Body of pancreas (tissue), 4 donors: ENCODE measurements at regions of chr1 and their contacts with region 1.

Region 1: DNA sequence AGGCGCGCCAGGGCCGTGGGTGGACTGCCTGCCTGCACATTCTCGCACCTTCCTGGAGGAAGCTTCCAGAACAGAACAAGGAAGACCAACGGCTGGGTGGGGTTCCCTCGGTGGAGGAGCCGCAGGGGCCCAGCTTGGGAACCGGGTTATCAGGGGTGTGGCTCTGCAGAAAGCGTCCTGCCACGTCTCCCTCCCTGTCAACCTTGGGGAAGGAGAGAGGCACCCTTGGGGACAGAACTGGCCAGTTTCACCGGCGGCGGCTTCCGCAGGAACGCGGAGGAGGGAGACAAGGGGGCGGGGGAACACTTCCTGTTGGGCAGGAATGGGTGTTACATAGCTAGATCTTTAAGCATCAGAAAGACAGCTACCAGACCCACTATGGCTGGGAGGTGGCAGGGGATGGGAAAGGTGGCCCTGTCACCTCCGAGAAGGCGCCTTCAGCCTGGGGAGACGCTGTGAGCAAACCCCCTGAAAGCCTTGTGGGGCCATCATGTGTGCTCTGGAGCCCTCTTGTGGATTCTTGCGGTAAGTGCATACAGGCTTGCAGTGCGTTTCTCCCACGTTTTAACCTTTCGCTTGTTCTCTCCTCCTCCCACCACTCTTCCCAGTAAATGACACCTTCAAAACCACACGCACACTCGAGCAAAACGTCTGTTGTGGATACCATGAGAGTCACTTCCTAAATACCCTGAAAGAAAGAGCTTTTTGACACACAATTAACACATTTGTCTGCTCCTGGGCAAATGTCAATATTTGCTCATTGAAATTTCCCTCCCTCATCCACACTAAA is 3.8 kb upstream of the PLEKHA6 start:
- DNase-seq: peak; percentile 74 to 78 (median 76)
- ATAC-seq: peak; percentile 84
- H3K4me3 ChIP-seq: peak overlapping the region in 1 of 2 donors; percentile 3
- H3K27ac ChIP-seq: peak overlapping the region in 3 of 4 donors; percentile 63 to 76 (median 65)
- H3K4me1 ChIP-seq: peaks cover 40% of the 10 kb centered on the region
- H3K27me3 ChIP-seq: no peaks in the 10 kb centered on the region
- CTCF ChIP-seq: peak; percentile 87 to 99 (median 97)
- POLR2A ChIP-seq: peak in 2 of 3 donors; percentile 12 to 32

Region 2: DNA sequence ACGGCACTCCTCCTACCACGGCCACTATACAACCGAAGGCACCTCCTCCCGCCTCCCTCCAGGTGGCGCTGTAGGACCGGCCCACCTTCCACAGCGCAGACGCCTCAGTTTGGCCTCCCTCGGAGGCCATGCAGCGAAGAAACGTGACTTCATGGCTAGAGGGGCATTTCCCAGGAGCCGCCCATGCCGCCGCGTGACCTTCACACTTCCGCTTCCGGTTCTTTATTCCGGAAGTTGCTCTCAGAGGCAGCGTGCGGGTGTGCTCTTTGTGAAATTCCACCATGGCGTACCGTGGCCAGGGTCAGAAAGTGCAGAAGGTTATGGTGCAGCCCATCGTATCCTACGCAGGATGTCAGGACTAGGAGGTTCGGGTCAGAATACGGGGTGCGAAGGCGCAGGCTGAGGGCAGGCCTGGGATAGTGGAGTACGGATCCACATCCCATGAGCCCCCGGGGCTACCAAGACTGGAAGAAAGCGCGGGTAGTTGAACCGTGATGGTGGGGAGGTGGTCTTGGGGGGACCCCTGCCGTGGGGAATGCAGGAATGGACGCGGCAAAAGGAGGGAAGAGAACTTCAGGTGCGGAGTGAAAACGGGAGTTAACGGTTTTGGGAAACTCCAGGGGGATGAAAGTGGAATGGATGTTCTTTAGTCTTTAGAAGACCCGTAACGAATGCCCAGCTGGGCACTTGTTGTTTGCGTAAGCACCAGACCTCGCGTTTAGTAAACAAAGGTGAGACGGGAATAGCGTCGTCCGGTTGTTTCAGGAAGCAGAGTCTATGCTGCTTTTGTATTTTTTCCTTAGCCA is 501.9 kb before region 1 on chr1 and contains the start of gene SNRPE:
- intact Hi-C with region 1: loop called (anchors 10 kb)
- DNase-seq: peak; percentile 96 to 97 (median 96)
- ATAC-seq: peak; percentile 95
- H3K4me3 ChIP-seq: peak within 1 kb of the TSS; percentile 77 to 83
- H3K27ac ChIP-seq: peak within 1 kb of the TSS; percentile 12 to 89 (median 78)
- H3K4me1 ChIP-seq: peaks cover 37% of the 10 kb centered on the region
- H3K27me3 ChIP-seq: no peaks in the 10 kb centered on the region
- CTCF ChIP-seq: peak; percentile 85 to 100 (median 98)
- POLR2A ChIP-seq: peak in 2 of 3 donors; percentile 77 to 79
- total RNA-seq, gene SNRPE: 27.2 to 80.8 TPM

Region 3: DNA sequence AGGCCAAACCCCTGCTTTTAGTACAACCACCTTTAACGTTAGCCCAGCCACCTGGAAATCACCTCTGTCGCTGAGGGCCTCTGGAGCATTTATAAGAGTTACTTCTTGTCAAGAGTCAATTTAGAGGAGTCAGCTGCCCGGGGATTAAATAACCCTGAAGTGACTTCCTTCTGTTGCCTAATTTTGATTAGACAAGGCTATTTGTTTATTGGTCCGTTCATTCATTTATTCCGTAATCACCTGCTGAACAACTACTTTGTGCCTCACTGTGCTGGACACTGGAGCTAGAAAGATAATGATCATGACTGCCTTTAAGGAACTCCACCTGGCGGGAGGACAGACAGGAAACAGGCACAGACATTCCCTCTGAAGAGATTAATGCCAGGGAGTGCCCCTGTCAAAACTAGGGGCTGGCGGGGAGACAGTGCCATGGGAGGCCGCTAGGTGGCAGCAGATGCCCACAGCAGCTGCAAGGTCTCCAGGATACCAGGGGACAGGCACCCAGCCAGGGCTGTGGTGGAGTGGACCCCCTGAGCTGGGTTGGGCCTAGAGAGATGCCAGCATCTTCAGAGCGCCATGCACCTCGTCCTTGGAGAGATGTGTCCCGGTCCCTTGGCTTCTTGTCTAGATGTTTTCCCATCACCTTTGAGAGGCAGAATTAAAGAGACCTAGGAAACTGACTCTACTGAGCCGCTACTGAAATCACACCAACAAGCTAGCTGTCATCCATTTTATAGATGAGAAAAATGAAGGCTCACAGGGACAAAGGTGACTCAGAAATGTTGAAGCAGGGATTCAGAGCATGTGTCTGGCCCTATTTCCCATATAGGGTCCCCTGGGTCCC is 201.1 kb before region 1 on chr1:
- intact Hi-C with region 1: loop called (anchors 5 kb)
- DNase-seq: peak; percentile 82 to 90 (median 84)
- ATAC-seq: peak; percentile 94
- H3K4me3 ChIP-seq: no peak overlapping the region
- H3K27ac ChIP-seq: peak overlapping the region in 2 of 4 donors; percentile 13 to 20
- H3K4me1 ChIP-seq: peaks cover 5% of the 10 kb centered on the region
- H3K27me3 ChIP-seq: no peaks in the 10 kb centered on the region
- CTCF ChIP-seq: peak; percentile 96 to 99 (median 98)
- POLR2A ChIP-seq: no peak

Region 4: GRCh38 chr1:204257954-204258752 is 105.4 kb before region 1 on chr1:
- intact Hi-C with region 1: loop called (anchors 5 kb)
- DNase-seq: peak; percentile 61 to 78 (median 70)
- ATAC-seq: peak; percentile 68
- H3K4me3 ChIP-seq: no peak overlapping the region
- H3K27ac ChIP-seq: no peak overlapping the region
- H3K4me1 ChIP-seq: no peaks in the 10 kb centered on the region
- H3K27me3 ChIP-seq: no peaks in the 10 kb centered on the region
- CTCF ChIP-seq: peak; percentile 60 to 81 (median 70)
- POLR2A ChIP-seq: no peak